Endothelial cell of umbilical vein (primary cell): ENCODE measurements at regions of chr15 and their contacts with region 1.

Region 1: DNA sequence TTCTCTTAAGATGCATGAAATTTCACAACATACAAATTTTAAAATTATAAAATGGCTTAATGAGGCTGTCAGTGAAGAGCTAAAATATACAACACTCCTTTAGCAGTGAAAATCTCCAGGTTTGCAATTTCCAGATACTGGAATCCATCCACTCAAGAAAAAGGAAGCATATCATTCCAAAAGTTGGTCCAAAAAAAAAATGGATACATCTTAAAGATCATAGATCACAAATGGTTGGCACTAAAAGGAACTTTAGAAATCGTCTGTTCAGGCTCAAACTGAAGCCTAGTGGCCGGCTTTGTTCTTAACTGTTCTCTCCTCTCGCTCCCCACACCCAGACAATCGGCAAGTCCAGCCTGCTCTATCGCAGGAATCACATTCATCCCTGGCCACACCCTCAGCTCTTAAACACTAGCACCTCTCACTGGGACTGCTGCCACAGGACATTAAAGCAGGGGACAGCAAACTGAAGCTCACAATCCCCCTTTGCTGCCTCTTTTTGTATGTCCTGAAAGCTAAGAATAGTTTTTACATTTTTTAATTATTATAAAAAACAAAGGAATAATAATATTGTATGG is 130.3 kb upstream of the CDIN1 start:
- DNase-seq: no peak
- H3K4me3 ChIP-seq: no peak overlapping the region
- H3K27ac ChIP-seq: no peak overlapping the region
- H3K4me1 ChIP-seq: no peaks in the 10 kb centered on the region
- H3K27me3 ChIP-seq: peaks cover 0 to 2% of the 10 kb centered on the region in 2 experiments
- CTCF ChIP-seq: no peak
- POLR2A ChIP-seq: no peak

Region 2: DNA sequence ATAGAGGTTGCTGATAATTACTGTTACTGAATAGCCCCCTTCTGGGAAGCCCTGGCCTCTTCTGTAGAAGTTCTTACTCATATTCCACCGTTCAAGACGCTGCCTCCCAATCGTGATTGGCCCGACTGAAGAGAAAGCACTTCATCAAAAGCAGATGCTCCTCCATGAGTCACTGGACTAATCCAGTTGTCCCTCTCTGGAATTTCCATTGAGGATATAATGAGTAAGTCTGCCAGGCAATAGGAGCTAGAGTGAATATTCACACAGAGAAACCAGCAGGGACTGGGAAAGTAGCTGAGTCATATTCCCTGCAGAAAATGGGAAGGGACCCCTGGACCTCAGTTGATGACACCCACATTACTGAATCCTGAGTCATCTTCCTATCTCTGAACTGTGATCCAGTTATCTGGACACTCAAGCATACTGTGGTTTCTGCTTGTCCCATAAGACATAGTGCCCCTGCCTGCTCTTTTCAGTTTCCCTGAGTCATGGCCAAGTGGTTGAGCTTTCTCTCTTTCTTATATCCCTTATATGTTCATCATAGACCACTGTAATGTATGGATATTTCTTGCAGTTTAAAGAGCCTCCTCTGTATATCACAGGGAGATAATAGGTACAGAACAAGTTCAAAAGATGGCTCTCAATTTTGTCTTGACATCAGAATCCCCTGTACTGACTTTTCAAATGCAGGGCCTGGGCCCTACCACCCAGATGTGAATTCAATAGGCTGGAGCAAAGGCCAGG is 20.9 kb before region 1 on chr15:
- CTCF ChIA-PET with region 1: no interaction called
- POLR2A ChIA-PET with region 1: no interaction called
- dilution Hi-C with region 1: no loop called
- intact Hi-C with region 1: loop called (anchors 1 kb)
- DNase-seq: peak; percentile 91
- H3K4me3 ChIP-seq: no peak overlapping the region
- H3K27ac ChIP-seq: peak overlapping the region; percentile 85
- H3K4me1 ChIP-seq: peaks cover 15% of the 10 kb centered on the region
- H3K27me3 ChIP-seq: no peaks in the 10 kb centered on the region
- CTCF ChIP-seq: no peak
- POLR2A ChIP-seq: no peak